GM13976 (cell line): ENCODE measurements at regions of chr4 and their contacts with region 1.

Region 1: GRCh38 chr4:168923526-168924194 is 86.4 kb downstream of the CBR4 start:
- DNase-seq: peak; percentile 57
- CTCF ChIP-seq: peak; percentile 59

Region 2: DNA sequence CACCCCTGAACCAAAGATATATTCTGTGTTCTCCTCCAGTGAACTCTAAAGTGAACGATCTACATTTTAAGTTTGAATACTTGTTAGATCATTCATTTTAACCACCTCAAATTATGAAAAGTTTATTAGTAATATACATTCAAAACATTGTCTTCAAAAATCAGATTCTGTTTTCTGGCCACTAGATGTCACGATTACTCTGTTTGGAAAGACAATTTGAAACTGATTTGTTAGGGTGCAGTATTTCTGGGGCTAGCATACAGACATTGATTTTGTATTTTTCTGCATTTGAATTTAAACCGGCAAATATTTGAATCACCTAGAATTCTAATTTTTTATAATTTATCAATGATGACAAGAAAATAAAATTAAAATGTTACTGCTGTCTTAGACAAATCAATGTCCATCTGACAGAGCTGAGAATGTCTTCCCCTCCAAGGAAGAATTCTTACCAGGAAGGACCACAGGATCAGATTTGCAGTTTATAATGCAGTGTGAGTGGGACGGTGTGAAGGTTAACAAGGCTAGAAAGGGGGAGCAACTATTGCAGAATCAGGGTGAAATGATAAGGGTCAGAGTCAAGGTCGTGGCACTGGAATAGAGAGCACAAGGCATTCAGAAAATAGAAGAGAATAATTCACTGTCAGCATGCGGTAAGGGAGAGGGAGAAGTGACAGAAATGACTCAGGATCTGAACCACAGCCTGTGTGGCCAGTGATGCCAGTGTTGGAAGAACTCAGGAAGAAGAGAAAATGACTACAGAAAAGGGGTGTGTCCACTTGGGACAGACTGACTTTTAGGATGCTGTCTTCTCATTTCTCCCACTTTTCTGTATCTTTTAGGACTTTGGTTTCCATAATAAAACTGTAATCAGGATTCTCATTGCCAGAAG is 739.7 kb before region 1 on chr4:
- in situ Hi-C with region 1: loop called (anchors 25 kb)
- DNase-seq: peak; percentile 53
- CTCF ChIP-seq: peak; percentile 34

Region 3: DNA sequence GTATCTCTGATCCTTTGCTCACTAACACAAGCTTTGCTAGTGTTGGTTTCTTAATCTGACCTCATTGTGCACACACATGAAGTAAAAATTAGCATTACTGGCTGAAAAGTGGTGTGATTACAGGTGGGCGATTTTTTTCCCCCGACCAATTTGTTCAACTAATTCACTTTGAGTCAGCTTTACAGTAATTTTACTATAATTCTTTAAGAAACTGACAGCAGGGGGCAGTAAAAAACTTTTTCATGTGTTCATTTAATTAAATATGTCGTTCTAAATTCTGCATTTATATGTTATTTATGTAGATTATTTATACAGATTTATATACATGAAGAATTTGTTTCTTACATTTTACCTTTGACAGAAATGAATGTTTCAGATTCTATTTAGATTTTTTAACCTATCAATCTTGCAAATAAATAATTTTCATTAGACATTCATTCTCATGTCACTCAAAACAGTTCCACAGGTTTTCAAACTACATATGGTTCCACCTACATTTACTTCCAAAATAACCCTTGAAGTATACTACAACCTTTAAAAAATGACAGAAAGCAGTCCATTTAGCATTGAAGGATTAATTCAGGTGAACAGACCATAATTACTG is 409.3 kb before region 1 on chr4:
- in situ Hi-C with region 1: loop called (anchors 25 kb)
- DNase-seq: peak; percentile 20
- CTCF ChIP-seq: no peak

Region 4: DNA sequence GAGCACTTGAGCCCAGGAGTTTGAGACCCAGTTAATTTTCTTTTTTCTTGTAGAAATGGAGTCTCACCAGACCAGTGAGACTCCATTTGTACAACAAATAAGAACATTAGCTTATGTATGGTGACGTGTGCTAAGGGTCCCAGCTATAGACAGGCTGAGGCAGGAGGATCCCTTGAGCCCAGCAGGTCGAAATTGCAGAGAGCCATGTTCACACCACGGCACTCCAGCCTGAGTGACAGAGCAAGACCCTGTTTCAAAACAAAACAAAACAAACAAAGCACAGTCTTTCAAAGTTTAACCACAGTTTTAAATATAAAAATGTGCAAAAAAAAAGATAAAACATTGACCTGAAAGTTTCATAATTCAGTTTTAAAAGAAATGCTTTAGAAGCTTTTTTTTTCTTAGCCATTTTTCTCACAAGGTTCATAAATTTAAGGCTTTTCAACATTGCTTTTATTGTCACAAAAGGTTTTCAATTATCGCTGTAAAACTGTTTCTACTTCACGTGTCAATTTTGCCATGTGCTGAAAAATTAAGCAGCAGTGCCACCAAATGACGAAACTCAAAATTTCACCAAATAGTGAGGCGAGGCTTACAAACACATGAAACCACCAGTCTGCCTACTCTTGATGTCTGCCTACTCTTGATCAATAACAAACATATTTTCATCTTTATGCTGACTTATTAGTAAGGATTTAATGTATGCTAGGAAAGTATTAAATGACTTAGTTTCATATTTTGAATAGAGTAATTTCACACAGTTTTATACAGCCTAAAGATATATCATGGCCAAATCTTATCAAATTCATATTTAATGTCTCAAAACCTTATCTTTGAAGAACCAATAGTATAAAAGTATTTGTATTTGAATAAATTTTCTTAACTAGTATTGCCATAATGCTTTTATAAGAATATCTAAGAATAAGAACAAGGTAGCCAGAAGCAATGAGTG is 562.4 kb after region 1 on chr4:
- in situ Hi-C with region 1: loop called (anchors 5 kb)
- DNase-seq: peak; percentile 52
- CTCF ChIP-seq: peak; percentile 52